Colonic mucosa (tissue), 4 donors: ENCODE measurements at regions of chr2 and their contacts with region 1.

Region 1: GRCh38 chr2:121717529-121717928 is 19.1 kb downstream of the NIFK start:
- DNase-seq: no peak
- H3K4me3 ChIP-seq: no peak overlapping the region
- H3K27ac ChIP-seq: no peak overlapping the region
- H3K4me1 ChIP-seq: no peaks in the 10 kb centered on the region
- H3K27me3 ChIP-seq: no peaks in the 10 kb centered on the region
- CTCF ChIP-seq: no peak

Region 2: GRCh38 chr2:121400201-121400600 is 317.3 kb before region 1 on chr2:
- intact Hi-C with region 1: loop called (anchors 5 kb)
- DNase-seq: no peak
- H3K4me3 ChIP-seq: no peak overlapping the region
- H3K27ac ChIP-seq: no peak overlapping the region
- H3K4me1 ChIP-seq: no peaks in the 10 kb centered on the region
- H3K27me3 ChIP-seq: no peaks in the 10 kb centered on the region
- CTCF ChIP-seq: no peak

Region 3: DNA sequence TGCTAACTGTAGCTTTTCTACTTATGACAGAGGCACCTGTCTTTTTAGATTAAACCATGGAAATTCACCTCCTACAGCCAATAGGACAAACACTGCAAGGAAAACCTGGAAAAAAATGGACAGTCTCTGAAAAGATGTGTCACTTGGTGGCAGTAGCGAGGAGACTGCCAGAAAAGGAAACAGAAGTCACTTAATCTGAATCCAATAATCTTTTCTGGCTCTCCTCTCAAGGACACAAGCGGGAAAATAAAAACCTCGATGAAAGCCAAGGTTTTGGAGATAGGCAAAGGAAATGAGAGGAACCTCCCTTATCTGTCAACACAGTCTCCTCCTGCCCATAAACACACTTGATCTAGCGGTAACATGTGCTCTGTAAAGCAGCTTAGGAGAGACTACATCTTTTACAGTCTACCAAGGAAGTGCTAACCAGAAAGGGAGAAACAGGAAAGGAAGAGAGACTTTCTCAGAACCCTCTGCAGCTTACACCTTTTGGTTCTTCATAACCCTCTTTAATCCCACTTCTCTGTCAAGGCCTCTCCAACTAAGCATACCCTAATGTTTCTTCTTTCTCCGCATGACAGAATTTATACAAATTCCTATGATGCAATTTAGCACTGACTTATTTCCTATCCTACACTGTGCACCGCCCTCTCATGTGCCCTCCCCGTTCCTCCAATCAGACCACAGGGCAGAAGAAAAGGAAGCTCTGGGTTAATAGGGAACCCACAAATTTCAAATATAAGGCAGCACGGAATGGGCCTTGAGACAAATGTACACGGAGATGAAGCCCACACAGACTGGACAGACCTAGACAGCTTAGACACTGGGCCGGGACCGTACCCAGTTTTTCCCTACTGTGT is 121.1 kb before region 1 on chr2:
- intact Hi-C with region 1: loop called (anchors 5 kb)
- DNase-seq: peak; percentile 44
- H3K4me3 ChIP-seq: no peak overlapping the region
- H3K27ac ChIP-seq: peak overlapping the region; percentile 31
- H3K4me1 ChIP-seq: no peaks in the 10 kb centered on the region
- H3K27me3 ChIP-seq: no peaks in the 10 kb centered on the region
- CTCF ChIP-seq: no peak

Region 4: GRCh38 chr2:121665504-121665903 is 52.0 kb before region 1 on chr2:
- intact Hi-C with region 1: no loop called
- DNase-seq: no peak
- H3K4me3 ChIP-seq: no peak overlapping the region
- H3K27ac ChIP-seq: no peak overlapping the region
- H3K4me1 ChIP-seq: no peaks in the 10 kb centered on the region
- H3K27me3 ChIP-seq: no peaks in the 10 kb centered on the region
- CTCF ChIP-seq: no peak